HepG2 (cell line): ENCODE measurements at regions of chr3 and their contacts with region 1.

Region 1: GRCh38 chr3:84666468-84666867 is 292.3 kb upstream of the CADM2 start:
- DNase-seq: no peak
- ATAC-seq: no peak
- H3K4me3 ChIP-seq: no peak overlapping the region
- H3K27ac ChIP-seq: no peak overlapping the region
- H3K4me1 ChIP-seq: no peaks in the 10 kb centered on the region
- H3K27me3 ChIP-seq: no peaks in the 10 kb centered on the region
- CTCF ChIP-seq: no peak
- EP300 ChIP-seq: no peak
- POLR2A ChIP-seq: no peak
- RAD21 ChIP-seq: no peak

Region 2: GRCh38 chr3:84683493-84683892 is 17.0 kb after region 1 on chr3:
- CTCF ChIA-PET with region 1: no interaction called
- POLR2A ChIA-PET with region 1: no interaction called
- in situ Hi-C with region 1: no loop called
- intact Hi-C with region 1: no loop called
- DNase-seq: no peak
- ATAC-seq: no peak
- H3K4me3 ChIP-seq: no peak overlapping the region
- H3K27ac ChIP-seq: no peak overlapping the region
- H3K4me1 ChIP-seq: no peaks in the 10 kb centered on the region
- H3K27me3 ChIP-seq: no peaks in the 10 kb centered on the region
- CTCF ChIP-seq: no peak
- EP300 ChIP-seq: no peak
- POLR2A ChIP-seq: no peak
- RAD21 ChIP-seq: no peak

Region 3: DNA sequence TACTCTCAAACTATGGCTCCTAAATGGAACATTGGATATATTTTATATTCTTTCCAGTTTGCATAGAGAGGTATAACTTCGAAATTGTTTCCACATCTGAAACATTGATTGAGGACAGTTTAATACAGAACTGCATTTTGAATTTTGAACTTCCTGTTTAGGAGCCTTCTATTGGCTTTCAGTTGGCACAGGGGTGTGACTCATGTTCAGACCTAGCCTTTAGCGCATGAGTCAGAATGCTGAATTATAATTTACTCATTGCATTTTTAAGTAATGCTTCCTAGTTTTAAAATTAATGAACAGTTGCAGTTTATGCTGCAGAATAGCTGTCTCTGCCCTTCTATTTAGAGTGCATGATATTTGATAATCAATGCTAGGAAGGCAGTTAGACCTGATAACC is 1044.0 kb after region 1 on chr3:
- CTCF ChIA-PET with region 1: no interaction called
- POLR2A ChIA-PET with region 1: no interaction called
- in situ Hi-C with region 1: no loop called
- intact Hi-C with region 1: loop called (anchors 5 kb)
- DNase-seq: no peak
- ATAC-seq: no peak
- H3K4me3 ChIP-seq: no peak overlapping the region
- H3K27ac ChIP-seq: no peak overlapping the region
- H3K4me1 ChIP-seq: no peaks in the 10 kb centered on the region
- H3K27me3 ChIP-seq: no peaks in the 10 kb centered on the region; a peak in 1 of 5 replicates
- CTCF ChIP-seq: no peak
- EP300 ChIP-seq: no peak
- POLR2A ChIP-seq: no peak
- RAD21 ChIP-seq: no peak